Aorta (tissue), 5 donors: ENCODE measurements at regions of chr12 and their contacts with region 1.

Region 1: DNA sequence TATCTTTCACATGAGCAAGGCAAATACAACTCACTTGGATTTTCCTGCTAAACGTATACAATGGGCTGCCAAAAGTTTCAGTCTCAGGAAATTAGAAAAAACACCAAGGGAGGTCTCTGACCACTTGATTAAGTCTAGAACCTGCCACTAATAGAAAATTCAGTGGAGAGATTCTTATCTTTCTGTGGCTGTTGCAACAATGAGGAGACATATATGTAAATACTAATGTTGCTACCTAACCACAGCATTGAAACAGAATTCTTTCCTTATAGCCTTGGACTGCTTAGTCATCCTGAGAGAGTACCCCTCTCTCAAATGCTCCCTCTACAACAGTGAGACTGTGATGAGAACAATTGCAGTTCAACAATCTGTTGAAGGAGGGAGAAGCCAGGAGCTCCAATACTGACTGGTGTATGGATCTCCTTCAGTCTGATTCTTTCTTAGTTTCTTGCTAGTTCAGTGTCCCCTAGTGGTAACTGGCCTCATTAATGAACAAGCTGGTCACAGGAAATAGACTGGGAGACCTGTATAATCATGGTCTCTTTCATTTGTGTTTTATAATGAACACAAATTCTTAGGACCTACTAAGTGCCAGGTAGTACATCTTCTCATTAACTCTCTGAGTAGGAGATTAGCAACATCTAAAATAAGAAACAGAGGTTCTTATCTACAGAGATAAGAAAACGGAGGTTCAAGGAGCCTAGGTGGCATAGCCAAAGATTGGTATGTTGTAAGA is 164.5 kb downstream of the SLC38A4 start:
- DNase-seq: no peak
- ATAC-seq: peak; percentile 88
- H3K4me3 ChIP-seq: no peak overlapping the region
- H3K27ac ChIP-seq: no peak overlapping the region
- H3K4me1 ChIP-seq: peaks cover 2 to 6% of the 10 kb centered on the region in 2 donors
- H3K27me3 ChIP-seq: no peaks in the 10 kb centered on the region

Region 2: GRCh38 chr12:45234139-45234846 is 1427.0 kb before region 1 on chr12:
- intact Hi-C with region 1: no loop called
- DNase-seq: no peak
- ATAC-seq: peak; percentile 89
- H3K4me3 ChIP-seq: peak overlapping the region; percentile 3 to 11
- H3K27ac ChIP-seq: peak overlapping the region; percentile 100
- H3K4me1 ChIP-seq: peaks cover 10 to 12% of the 10 kb centered on the region in 2 donors
- H3K27me3 ChIP-seq: no peaks in the 10 kb centered on the region

Region 3: DNA sequence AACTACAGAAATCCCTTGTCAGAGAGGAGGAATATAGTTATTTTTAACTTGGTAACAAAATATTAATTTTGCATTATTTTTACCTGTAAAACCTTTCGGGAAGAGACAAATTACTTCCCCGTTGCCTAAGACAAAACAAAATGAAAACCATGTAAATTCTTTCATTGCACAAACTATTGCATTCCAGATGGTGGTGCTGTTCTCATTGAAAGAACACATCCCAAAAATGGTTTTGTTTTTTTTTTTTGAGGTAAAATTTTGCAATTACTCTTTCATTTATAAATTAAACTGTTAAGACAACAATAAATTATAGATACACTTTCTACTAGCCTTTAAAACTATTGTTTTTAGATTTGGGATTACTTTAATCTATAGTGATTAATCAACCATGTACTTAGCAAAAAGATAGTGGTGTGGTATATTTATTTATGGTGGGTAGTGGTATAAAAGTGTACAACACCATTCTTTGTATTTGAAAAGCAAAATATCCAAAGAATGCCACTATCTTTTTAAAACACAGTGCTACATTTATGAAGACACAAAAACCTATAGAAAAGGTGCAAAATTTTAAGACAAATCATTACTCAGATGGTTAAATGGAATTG is 507.9 kb before region 1 on chr12:
- intact Hi-C with region 1: loop called in 1 of 2 experiments (anchors 10 kb)
- DNase-seq: no peak
- ATAC-seq: no peak
- H3K4me3 ChIP-seq: no peak overlapping the region
- H3K27ac ChIP-seq: no peak overlapping the region
- H3K4me1 ChIP-seq: peaks cover 0 to 3% of the 10 kb centered on the region in 2 donors
- H3K27me3 ChIP-seq: no peaks in the 10 kb centered on the region

Region 4: DNA sequence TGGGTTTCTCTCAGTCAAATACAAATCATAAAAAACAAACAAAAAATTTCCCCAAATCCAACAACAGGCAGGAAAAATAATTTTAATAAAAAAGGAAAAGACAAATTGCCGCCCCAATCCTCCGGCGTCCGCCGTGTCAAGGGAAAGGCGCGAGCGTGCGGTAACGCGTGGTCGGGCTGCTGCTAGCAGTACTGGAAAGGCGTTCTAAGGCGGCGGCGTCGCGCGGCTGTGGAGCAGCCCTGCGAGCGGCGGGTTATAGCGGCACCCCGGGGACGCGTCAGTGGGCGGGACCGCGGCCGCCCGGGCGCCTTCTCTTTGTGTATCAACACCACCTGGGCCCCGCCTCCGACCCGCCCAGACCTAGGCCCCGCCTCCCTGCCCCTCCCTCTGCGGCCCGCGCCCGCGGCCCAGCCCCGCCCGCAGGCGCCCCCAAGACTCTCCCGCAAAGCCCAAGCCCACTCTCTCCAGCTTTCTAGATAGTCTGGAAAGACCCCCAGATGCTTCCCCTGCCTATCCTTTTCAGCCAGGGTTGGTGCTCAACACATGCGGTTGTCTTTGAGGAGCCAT is 288.7 kb before region 1 on chr12 and contains the start of gene SLC38A2:
- intact Hi-C with region 1: loop called (anchors 5 kb)
- DNase-seq: peak; percentile 99 to 100
- ATAC-seq: peak; percentile 97
- H3K4me3 ChIP-seq: peak within 1 kb of the TSS; percentile 88 to 93
- H3K27ac ChIP-seq: peak within 1 kb of the TSS; percentile 92 to 97
- H3K4me1 ChIP-seq: peaks cover 3 to 6% of the 10 kb centered on the region in 2 donors
- H3K27me3 ChIP-seq: no peaks in the 10 kb centered on the region
- total RNA-seq, gene SLC38A2: 329 to 405 TPM

Region 5: DNA sequence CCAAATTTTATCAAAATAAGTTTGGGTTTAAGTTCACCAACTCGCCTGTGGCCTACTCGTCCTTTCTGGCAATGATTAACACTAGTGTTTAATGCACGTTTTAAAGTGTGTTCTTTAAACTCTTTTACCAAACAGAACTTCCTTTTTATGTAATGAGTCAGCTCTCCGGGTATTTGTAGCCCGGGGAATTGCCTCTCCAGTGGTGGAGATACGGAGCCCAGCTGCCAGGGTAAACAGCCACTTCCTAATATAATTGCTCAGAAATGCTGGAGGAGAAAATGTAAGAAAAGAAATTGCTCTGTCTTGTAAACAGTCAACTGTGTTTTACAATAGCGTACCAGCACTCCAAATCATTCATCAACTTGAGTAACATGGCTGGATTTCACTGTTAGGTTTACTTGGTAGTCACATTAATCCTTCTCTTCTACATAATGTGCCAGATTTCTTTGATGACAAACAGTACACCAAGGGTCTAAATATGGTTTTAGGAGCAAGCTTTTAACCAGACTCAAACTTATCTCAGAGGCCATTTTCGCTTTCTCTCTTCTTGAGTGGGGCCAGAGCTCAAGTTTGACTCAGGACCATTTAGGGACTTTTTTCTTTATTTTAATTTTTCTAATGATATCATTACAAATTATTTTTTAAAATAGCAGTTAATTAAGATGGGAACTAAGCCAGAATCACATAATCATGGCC is 187.5 kb before region 1 on chr12:
- intact Hi-C with region 1: loop called (anchors 5 to 10 kb)
- DNase-seq: peak; percentile 83 to 85
- ATAC-seq: peak; percentile 88
- H3K4me3 ChIP-seq: peak overlapping the region in 1 of 2 donors; percentile 34
- H3K27ac ChIP-seq: peak overlapping the region; percentile 72 to 95
- H3K4me1 ChIP-seq: peaks cover 0 to 3% of the 10 kb centered on the region in 2 donors
- H3K27me3 ChIP-seq: no peaks in the 10 kb centered on the region

Region 6: GRCh38 chr12:46609674-46610073 is 51.6 kb before region 1 on chr12:
- intact Hi-C with region 1: loop called in 1 of 2 experiments (anchors 5 kb)
- DNase-seq: no peak
- ATAC-seq: no peak
- H3K4me3 ChIP-seq: no peak overlapping the region
- H3K27ac ChIP-seq: peak overlapping the region; percentile 12 to 91
- H3K4me1 ChIP-seq: peaks cover 0 to 4% of the 10 kb centered on the region in 2 donors
- H3K27me3 ChIP-seq: no peaks in the 10 kb centered on the region